ENCODE measurements at regions of chr19 and their contacts with region 1.

Region 1: GRCh38 chr19:6125571-6125989 is 9.9 kb upstream of the ACSBG2 start:
- DNase-seq: peak; percentile 85
- H3K4me3 ChIP-seq: no peak overlapping the region
- H3K27ac ChIP-seq: no peak overlapping the region
- H3K4me1 ChIP-seq: no peaks in the 10 kb centered on the region
- CTCF ChIP-seq: peak; percentile 94

Region 2: GRCh38 chr19:6048808-6049405 is 76.7 kb before region 1 on chr19:
- CTCF ChIA-PET with region 1: interaction called, 3 read pairs
- POLR2A ChIA-PET with region 1: no interaction called
- intact Hi-C with region 1: loop called (anchors 1 kb)
- DNase-seq: peak; percentile 77
- H3K4me3 ChIP-seq: no peak overlapping the region
- H3K27ac ChIP-seq: no peak overlapping the region
- H3K4me1 ChIP-seq: no peaks in the 10 kb centered on the region
- CTCF ChIP-seq: peak; percentile 88

Region 3: DNA sequence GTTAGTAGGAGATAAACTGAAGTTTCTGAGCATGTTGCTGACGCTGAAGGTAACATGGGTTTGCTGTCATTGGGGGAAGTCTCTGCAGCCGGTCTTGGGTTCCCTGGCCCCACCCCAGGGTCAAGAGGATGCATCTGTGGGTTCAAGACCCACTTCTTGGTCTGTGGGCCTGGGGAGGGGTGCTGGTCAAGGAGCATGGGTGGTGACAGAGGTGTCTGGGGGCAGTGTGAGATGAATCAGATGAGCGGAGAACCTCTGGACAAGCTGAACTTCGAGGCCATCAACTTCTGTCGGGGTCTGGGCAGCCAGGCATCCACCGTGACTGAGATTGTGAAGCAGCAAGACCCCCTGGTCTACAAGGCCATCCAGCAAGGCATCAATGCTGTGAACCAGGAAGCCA is 61.8 kb after region 1 on chr19:
- CTCF ChIA-PET with region 1: no interaction called
- POLR2A ChIA-PET with region 1: no interaction called
- intact Hi-C with region 1: no loop called
- DNase-seq: no peak
- H3K4me3 ChIP-seq: no peak overlapping the region
- H3K27ac ChIP-seq: no peak overlapping the region
- H3K4me1 ChIP-seq: no peaks in the 10 kb centered on the region
- CTCF ChIP-seq: no peak

Region 4: DNA sequence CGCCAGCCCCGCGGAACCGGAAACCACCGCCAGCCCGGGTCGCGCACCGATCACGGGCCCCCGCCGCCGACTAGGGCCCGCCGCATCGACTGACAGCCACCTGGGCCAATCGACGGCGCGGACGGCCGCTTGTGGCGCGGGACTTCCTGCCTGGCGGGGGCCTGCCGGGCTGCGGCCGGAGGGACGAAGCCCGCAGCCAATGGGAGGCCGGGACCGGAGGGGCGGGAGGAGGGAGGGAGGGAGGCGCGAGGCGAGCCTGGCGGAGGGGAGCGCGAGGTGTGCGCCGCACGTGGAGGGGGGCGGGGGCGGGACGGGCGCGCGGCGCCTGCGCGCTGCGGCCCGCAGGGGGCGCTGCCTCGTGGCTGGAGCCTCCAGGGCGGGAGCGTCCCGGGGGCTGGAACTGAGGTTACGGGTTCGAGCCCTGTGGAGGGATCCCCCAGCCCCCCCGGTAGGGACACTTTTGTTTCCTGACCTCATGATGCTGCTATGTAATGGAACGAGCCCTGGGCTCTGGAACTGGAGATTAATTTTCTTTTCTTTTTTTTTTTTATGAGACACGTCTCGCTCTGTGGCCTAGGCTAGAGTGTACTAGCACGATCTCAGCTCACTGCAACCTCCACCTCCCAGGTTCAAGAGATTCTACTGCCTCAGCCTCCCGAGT is 154.5 kb after region 1 on chr19 and contains the start of gene MLLT1:
- CTCF ChIA-PET with region 1: no interaction called
- POLR2A ChIA-PET with region 1: no interaction called
- intact Hi-C with region 1: no loop called
- DNase-seq: peak; percentile 97
- H3K4me3 ChIP-seq: peak within 1 kb of the TSS; percentile 86
- H3K27ac ChIP-seq: peak within 1 kb of the TSS; percentile 18
- H3K4me1 ChIP-seq: peaks cover 23% of the 10 kb centered on the region
- CTCF ChIP-seq: peak; percentile 78
- total RNA-seq, gene MLLT1: 14.3 and 17.5 TPM in 2 replicates

Region 5: GRCh38 chr19:6297202-6297601 is 171.6 kb after region 1 on chr19:
- CTCF ChIA-PET with region 1: no interaction called
- POLR2A ChIA-PET with region 1: no interaction called
- intact Hi-C with region 1: loop called (anchors 2 kb)
- DNase-seq: no peak
- H3K4me3 ChIP-seq: no peak overlapping the region
- H3K27ac ChIP-seq: no peak overlapping the region
- H3K4me1 ChIP-seq: no peaks in the 10 kb centered on the region
- CTCF ChIP-seq: no peak

Region 6: DNA sequence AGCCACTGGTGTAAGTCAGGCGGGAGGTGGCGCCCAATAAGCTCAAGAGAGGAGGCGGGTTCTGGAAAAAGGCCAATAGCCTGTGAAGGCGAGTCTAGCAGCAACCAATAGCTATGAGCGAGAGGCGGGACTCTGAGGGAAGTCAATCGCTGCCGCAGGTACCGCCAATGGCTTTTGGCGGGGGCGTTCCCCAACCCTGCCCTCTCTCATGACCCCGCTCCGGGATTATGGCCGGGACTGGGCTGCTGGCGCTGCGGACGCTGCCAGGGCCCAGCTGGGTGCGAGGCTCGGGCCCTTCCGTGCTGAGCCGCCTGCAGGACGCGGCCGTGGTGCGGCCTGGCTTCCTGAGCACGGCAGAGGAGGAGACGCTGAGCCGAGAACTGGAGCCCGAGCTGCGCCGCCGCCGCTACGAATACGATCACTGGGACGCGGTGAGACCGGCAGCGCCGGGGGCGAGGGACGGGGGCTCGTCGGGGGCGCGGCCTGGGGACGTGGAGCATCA is 247.1 kb after region 1 on chr19 and contains the start of gene ALKBH7:
- CTCF ChIA-PET with region 1: no interaction called
- POLR2A ChIA-PET with region 1: no interaction called
- intact Hi-C with region 1: no loop called
- DNase-seq: peak; percentile 100
- H3K4me3 ChIP-seq: peak within 1 kb of the TSS; percentile 84
- H3K27ac ChIP-seq: peak within 1 kb of the TSS; percentile 85
- H3K4me1 ChIP-seq: peaks cover 13% of the 10 kb centered on the region
- CTCF ChIP-seq: no peak
- total RNA-seq, gene ALKBH7: 35.8 and 61.0 TPM in 2 replicates